Sigmoid colon (tissue), 7 donors: ENCODE measurements at regions of chr5 and their contacts with region 1.

Region 1: DNA sequence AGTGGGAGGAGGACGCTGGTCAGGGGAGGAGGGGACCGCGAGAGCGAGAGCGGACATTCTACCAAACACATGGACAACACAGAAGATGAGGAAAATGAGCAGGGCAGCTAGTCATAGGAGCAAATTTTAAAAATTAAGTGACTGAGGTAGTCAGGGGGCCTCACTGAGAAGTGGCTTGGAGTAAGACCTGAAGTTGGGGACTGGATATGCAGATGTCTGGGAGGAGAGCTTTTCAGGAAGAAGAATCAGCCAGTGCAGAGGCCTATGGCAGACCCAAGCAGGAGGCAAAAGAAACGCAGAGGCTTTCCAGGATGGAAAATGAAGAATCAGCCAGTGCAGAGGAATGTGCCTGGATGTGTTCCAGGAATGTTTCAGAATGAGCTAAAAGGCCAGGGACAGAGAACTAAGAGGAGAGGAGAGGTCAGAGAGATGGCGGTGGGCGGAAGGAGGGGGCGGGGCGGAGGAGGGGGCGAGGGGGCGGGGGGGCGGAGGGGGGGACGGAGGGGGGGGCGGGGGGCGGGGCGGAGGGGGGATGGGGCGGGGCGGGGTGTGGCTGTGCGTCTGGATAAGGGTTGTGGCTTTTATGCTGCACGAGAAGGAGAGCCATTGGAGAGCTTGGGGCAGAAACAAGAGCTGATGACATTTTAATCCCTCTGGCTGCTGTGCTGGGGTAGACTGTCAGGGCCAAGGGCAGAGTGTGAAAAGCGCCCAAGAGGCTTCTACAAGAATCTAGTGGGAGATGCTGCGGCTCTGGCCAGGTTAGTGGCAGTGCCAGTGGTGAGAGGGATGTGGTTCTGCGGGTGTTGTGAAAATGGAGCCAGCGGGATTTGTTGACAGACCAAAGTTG is 129.6 kb downstream of the KCNIP1 start:
- DNase-seq: peak; percentile 86
- H3K4me3 ChIP-seq: peak overlapping the region in 3 of 4 donors; percentile 28 to 42 (median 31)
- H3K27ac ChIP-seq: peak overlapping the region; percentile 81 to 87 (median 84)
- H3K4me1 ChIP-seq: peaks cover 0 to 41% (median 38%) of the 10 kb centered on the region in 4 donors
- H3K27me3 ChIP-seq: no peaks in the 10 kb centered on the region
- CTCF ChIP-seq: peak in 1 of 4 experiments; percentile 1
- EP300 ChIP-seq: no peak
- POLR2A ChIP-seq: no peak

Region 2: GRCh38 chr5:170100066-170100943 is 533.2 kb before region 1 on chr5:
- intact Hi-C with region 1: loop called (anchors 5 kb)
- DNase-seq: peak; percentile 84
- H3K4me3 ChIP-seq: no peak overlapping the region
- H3K27ac ChIP-seq: no peak overlapping the region
- H3K4me1 ChIP-seq: peaks cover 0 to 6% (median 0%) of the 10 kb centered on the region in 4 donors
- H3K27me3 ChIP-seq: no peaks in the 10 kb centered on the region
- CTCF ChIP-seq: peak in 3 of 4 experiments; percentile 42 to 49 (median 43)
- EP300 ChIP-seq: no peak
- POLR2A ChIP-seq: no peak

Region 3: DNA sequence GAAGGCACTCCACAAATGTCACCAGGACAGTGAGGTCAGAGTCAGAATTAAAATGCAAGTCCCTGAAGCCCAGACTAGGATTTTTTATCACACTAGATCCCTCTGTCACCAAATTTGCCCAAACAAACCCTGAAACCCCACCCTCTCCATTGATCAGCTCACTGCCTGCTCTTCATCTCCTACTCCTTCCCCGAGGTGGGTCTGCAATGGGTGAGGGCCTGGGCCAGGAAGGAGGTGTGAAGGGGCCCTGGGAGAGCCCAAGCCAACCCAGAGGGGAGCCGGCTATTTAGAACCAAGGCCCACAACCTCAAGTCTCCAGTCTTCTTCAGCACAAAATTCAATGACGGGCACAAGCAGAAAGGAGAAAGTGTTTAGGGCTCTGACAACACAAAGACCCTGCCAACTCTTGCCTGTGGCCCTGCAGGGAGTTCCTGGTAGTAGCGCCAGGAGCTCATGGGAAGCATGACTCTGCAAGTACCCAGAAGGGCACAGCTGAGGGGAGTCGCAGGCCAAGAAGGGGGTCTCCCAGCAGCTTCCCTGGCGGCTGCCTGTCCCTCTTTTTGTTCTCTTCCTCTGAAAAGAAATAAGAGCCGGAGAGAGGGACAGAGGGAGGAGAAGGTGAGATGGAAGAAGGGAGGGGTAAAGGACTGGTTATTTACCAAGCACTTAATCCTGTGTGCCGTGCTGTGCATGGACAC is 522.2 kb before region 1 on chr5:
- intact Hi-C with region 1: no loop called
- DNase-seq: peak; percentile 26
- H3K4me3 ChIP-seq: no peak overlapping the region
- H3K27ac ChIP-seq: no peak overlapping the region
- H3K4me1 ChIP-seq: no peaks in the 10 kb centered on the region
- H3K27me3 ChIP-seq: no peaks in the 10 kb centered on the region
- CTCF ChIP-seq: no peak
- EP300 ChIP-seq: no peak
- POLR2A ChIP-seq: no peak

Region 4: GRCh38 chr5:170225326-170226128 is 407.9 kb before region 1 on chr5:
- intact Hi-C with region 1: loop called (anchors 5 kb)
- DNase-seq: peak; percentile 86
- H3K4me3 ChIP-seq: no peak overlapping the region
- H3K27ac ChIP-seq: no peak overlapping the region
- H3K4me1 ChIP-seq: peaks cover 0 to 26% (median 8%) of the 10 kb centered on the region in 4 donors
- H3K27me3 ChIP-seq: no peaks in the 10 kb centered on the region
- CTCF ChIP-seq: peak; percentile 34 to 73 (median 63)
- EP300 ChIP-seq: no peak
- POLR2A ChIP-seq: no peak

Region 5: GRCh38 chr5:170267431-170268152 is 365.9 kb before region 1 on chr5:
- intact Hi-C with region 1: loop called (anchors 5 kb)
- DNase-seq: peak; percentile 92
- H3K4me3 ChIP-seq: peak overlapping the region in 3 of 4 donors; percentile 5 to 24 (median 22)
- H3K27ac ChIP-seq: peak overlapping the region; percentile 38 to 62 (median 49)
- H3K4me1 ChIP-seq: peaks cover 0 to 14% (median 14%) of the 10 kb centered on the region in 4 donors
- H3K27me3 ChIP-seq: peaks cover 0 to 8% (median 0%) of the 10 kb centered on the region in 3 donors
- CTCF ChIP-seq: peak; percentile 66 to 85 (median 77)
- EP300 ChIP-seq: no peak
- POLR2A ChIP-seq: no peak

Region 6: GRCh38 chr5:170434966-170435605 is 198.4 kb before region 1 on chr5:
- intact Hi-C with region 1: loop called (anchors 1 kb)
- DNase-seq: peak; percentile 80
- H3K4me3 ChIP-seq: no peak overlapping the region
- H3K27ac ChIP-seq: no peak overlapping the region
- H3K4me1 ChIP-seq: peaks cover 0 to 4% (median 0%) of the 10 kb centered on the region in 4 donors
- H3K27me3 ChIP-seq: peaks cover 0 to 15% (median 9%) of the 10 kb centered on the region in 3 donors
- CTCF ChIP-seq: peak; percentile 83 to 99 (median 87)
- EP300 ChIP-seq: no peak
- POLR2A ChIP-seq: no peak

Region 7: DNA sequence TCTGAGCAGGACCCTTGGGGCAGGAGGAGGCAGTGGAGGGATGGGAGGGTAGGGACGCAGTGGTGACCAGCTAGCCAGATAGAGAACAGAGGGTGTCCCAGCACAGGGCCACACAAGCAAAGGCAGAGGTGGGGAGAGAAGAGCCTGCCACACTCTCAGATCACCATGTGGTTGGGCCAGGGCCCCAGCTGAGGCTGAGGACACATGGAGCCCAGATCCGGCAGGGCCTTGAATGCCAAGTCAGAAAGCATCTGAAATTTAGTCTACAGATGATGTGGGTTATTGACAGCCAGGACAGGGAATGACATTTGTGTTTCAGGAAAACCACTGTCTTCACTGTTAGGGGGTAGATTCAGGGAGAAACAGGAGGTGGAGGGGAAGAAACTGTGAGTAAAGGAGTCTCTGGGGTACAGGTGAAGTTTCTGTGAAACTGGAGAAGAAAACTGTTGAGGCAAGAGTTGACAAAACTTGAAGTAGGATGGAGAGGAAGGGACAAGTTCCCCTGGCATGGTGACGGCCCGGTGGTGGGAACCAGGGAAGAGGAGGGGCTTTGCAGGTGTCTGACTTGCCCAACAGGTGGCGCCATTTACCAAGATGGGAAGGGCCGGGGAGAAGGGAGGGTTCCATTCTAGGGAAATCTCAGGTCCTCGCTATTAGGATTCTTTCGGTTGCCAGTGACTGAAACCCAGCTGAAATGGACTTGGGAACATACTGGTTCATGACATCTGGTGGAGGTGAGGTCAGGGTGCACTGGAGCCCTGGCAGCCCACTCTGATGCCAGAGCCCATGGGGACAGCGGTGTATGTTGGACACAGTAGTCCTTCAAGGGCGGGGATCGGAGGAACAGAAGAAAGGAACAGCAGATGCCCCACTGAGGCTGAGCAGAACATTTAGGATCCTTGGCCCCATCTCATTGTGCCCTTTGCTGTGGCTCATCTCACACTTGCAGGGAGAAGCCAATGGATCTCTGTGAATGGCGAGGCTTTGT is 29.6 kb before region 1 on chr5:
- intact Hi-C with region 1: loop called (anchors 2 kb)
- DNase-seq: peak; percentile 62
- H3K4me3 ChIP-seq: no peak overlapping the region
- H3K27ac ChIP-seq: no peak overlapping the region
- H3K4me1 ChIP-seq: no peaks in the 10 kb centered on the region
- H3K27me3 ChIP-seq: no peaks in the 10 kb centered on the region
- CTCF ChIP-seq: peak in 3 of 4 experiments; percentile 33 to 66 (median 57)
- EP300 ChIP-seq: no peak
- POLR2A ChIP-seq: no peak

Region 8: GRCh38 chr5:170892196-170892595 is 258.7 kb after region 1 on chr5:
- intact Hi-C with region 1: no loop called
- DNase-seq: no peak
- H3K4me3 ChIP-seq: no peak overlapping the region
- H3K27ac ChIP-seq: no peak overlapping the region
- H3K4me1 ChIP-seq: no peaks in the 10 kb centered on the region
- H3K27me3 ChIP-seq: no peaks in the 10 kb centered on the region
- CTCF ChIP-seq: no peak
- EP300 ChIP-seq: no peak
- POLR2A ChIP-seq: no peak